Heart left ventricle (tissue), 16 donors: ENCODE measurements at regions of chr9 and their contacts with region 1.

Region 1: GRCh38 chr9:19471737-19472648 is 63.2 kb downstream of the ACER2 start:
- DNase-seq: peak; percentile 43 to 75 (median 61)
- ATAC-seq: peak; percentile 32 to 88 (median 78)
- H3K4me3 ChIP-seq: peak overlapping the region in 7 of 12 donors; percentile 10 to 34 (median 17)
- H3K27ac ChIP-seq: peak overlapping the region in 1 of 12 donors; percentile 42
- H3K4me1 ChIP-seq: peaks cover 0 to 15% (median 10%) of the 10 kb centered on the region in 12 donors
- H3K27me3 ChIP-seq: no peaks in the 10 kb centered on the region
- CTCF ChIP-seq: peak; percentile 65 to 85 (median 74)
- POLR2A ChIP-seq: no peak

Region 2: GRCh38 chr9:19358701-19359100 is 113.3 kb before region 1 on chr9:
- intact Hi-C with region 1: no loop called
- DNase-seq: no peak
- ATAC-seq: no peak
- H3K4me3 ChIP-seq: no peak overlapping the region
- H3K27ac ChIP-seq: no peak overlapping the region
- H3K4me1 ChIP-seq: no peaks in the 10 kb centered on the region
- H3K27me3 ChIP-seq: no peaks in the 10 kb centered on the region
- CTCF ChIP-seq: no peak
- POLR2A ChIP-seq: no peak

Region 3: DNA sequence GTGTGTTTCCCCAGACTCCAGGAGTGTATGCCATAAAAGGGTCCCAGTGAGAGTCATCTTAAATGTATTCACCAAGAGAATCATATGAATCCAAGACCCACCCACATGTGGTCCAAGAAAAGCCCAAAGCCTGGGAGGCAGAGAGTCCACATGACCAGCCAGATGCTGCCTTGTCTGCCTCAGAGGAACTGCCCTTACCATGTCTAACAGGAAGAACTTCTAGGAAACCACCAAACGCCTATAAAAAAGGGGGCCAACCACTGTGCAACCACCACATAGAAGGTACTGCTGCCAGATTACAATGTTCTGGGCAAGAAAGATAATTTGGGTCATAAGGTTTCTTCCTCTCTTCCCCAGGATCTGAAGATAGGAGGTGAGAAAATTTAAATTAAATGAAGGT is 446.6 kb after region 1 on chr9:
- intact Hi-C with region 1: loop called in 3 of 10 experiments (anchors 5 to 10 kb)
- DNase-seq: no peak
- ATAC-seq: no peak
- H3K4me3 ChIP-seq: no peak overlapping the region
- H3K27ac ChIP-seq: no peak overlapping the region
- H3K4me1 ChIP-seq: no peaks in the 10 kb centered on the region
- H3K27me3 ChIP-seq: peaks cover 0 to 6% (median 0%) of the 10 kb centered on the region in 9 donors
- CTCF ChIP-seq: no peak
- POLR2A ChIP-seq: no peak